ENCODE measurements at regions of chr4 and their contacts with region 1.

Region 1: DNA sequence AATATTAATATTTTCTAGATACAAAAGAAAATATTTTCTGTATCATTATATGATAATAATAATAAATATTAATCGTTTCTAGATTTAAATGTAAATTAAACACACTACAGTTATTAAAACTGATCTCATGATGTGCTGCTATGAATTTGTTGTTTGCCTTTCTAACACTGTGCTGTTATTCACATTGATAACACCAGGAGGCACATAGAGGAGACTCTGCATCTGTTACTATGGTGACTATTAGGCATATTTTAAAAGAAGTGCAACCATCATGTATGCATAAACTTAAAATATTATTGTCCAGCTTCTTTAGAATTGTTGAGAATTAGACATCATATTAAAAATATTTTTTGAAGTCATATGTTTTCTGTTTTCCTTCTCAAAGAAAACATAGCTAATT is 11.8 kb upstream of the PDGFC start:
- DNase-seq: peak; percentile 44
- H3K4me3 ChIP-seq: no peak overlapping the region
- H3K27ac ChIP-seq: no peak overlapping the region
- H3K4me1 ChIP-seq: no peaks in the 10 kb centered on the region
- H3K27me3 ChIP-seq: no peaks in the 10 kb centered on the region
- CTCF ChIP-seq: peak; percentile 23 to 43
- POLR2A ChIP-seq: no peak

Region 2: DNA sequence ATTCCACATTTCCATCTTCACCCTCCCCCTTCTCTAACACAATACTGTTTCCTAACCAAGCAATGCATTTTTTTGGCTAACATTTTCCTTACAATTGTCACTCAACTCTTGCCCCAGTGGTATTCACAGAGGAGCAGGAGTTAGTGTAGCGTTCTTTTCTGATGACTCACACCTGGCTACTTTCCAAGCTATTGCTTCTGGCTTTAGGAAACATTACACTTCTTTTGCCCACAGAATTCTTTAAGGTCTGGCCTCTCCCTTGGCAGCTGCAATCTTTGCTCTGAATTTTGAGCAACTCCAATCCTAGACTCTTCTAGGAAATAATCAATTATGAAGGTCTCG is 15.8 kb after region 1 on chr4:
- CTCF ChIA-PET with region 1: interaction called, 19 read pairs
- POLR2A ChIA-PET with region 1: no interaction called
- dilution Hi-C with region 1: no loop called
- intact Hi-C with region 1: loop called (anchors 1 kb)
- DNase-seq: peak; percentile 98
- H3K4me3 ChIP-seq: peak overlapping the region in 1 of 3 experiments; percentile 2
- H3K27ac ChIP-seq: peak overlapping the region; percentile 62
- H3K4me1 ChIP-seq: peaks cover 23% of the 10 kb centered on the region
- H3K27me3 ChIP-seq: no peaks in the 10 kb centered on the region
- CTCF ChIP-seq: no peak
- POLR2A ChIP-seq: no peak

Region 3: DNA sequence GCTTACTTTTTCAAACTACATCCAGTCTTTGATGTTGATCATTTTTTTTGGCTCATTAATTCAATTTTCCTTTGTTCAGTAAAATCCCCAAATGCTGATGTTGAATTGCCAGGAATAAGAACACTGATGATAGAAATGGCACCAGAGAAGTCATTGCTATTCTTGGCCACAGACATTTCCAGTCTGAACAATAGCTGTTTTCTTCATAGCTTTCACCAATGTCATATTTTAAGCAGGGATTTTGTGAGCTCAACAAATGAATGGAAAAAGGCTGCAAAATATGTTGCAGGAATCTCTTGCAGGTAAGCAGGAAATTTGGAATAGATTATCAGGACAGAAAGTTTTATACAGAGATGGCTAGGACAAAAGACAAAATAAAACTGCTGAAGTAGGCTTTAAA is 52.1 kb after region 1 on chr4:
- CTCF ChIA-PET with region 1: interaction called, 12 read pairs
- POLR2A ChIA-PET with region 1: no interaction called
- dilution Hi-C with region 1: no loop called
- intact Hi-C with region 1: no loop called
- DNase-seq: peak; percentile 86
- H3K4me3 ChIP-seq: no peak overlapping the region
- H3K27ac ChIP-seq: no peak overlapping the region
- H3K4me1 ChIP-seq: no peaks in the 10 kb centered on the region
- H3K27me3 ChIP-seq: no peaks in the 10 kb centered on the region
- CTCF ChIP-seq: no peak
- POLR2A ChIP-seq: no peak

Measured in endothelial cell of umbilical vein (primary cell).